ENCODE measurements at regions of chr20 and their contacts with region 1.

Region 1: GRCh38 chr20:44080646-44081267 is 106.2 kb downstream of the JPH2 start:
- DNase-seq: peak; percentile 55 to 84 (median 66)
- H3K4me3 ChIP-seq: no peak overlapping the region
- H3K4me3 Mint-ChIP-seq: no peak overlapping the region
- H3K27ac ChIP-seq: no peak overlapping the region
- H3K27ac Mint-ChIP-seq: peak overlapping the region in 5 of 8 donors; percentile 14 to 59 (median 31)
- H3K4me1 ChIP-seq: peaks cover 9% of the 10 kb centered on the region
- H3K4me1 Mint-ChIP-seq: peaks cover 5 to 10% (median 10%) of the 10 kb centered on the region in 3 donors
- H3K27me3 ChIP-seq: no peaks in the 10 kb centered on the region
- H3K27me3 Mint-ChIP-seq: peaks cover 0 to 3% of the 10 kb centered on the region in 2 donors

Region 2: DNA sequence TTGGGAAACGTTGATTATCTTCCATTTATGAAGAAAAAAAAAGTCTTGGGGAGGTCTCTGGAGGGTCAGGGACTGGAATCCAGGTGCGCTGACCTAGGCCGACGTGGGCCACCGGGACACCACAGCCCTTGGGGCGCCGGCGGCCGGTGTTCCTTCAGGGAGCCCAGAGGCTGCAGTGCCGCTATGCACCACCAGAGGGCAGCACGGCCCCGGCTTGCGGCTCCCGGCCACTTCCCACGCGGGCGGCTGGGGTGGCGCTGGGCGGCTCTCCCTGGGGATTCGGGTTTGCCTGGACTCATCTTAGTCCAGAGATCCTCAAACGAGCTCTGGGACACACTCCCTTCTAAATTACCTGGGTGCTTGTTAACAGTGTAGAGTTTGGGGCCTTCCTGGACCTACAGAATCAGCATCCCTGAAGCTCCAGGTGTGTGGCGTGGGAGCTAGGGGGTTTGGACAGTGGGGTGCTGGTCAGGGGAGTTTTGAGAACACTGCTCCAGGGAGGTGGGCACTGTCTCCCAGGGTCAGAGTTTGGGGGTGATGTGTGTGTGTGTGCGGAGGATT is 330.9 kb before region 1 on chr20:
- CTCF ChIA-PET with region 1: interaction called, 74 read pairs
- POLR2A ChIA-PET with region 1: no interaction called
- DNase-seq: peak; percentile 57 to 83 (median 73)
- H3K4me3 ChIP-seq: no peak overlapping the region
- H3K4me3 Mint-ChIP-seq: no peak overlapping the region
- H3K27ac ChIP-seq: no peak overlapping the region
- H3K27ac Mint-ChIP-seq: no peak overlapping the region
- H3K4me1 ChIP-seq: peaks cover 24% of the 10 kb centered on the region
- H3K4me1 Mint-ChIP-seq: peaks cover 22 to 36% (median 33%) of the 10 kb centered on the region in 3 donors
- H3K27me3 ChIP-seq: peaks cover 6% of the 10 kb centered on the region
- H3K27me3 Mint-ChIP-seq: peaks cover 5 to 45% of the 10 kb centered on the region in 2 donors

Region 3: GRCh38 chr20:44056010-44056698 is 24.6 kb before region 1 on chr20:
- CTCF ChIA-PET with region 1: interaction called, 48 read pairs
- POLR2A ChIA-PET with region 1: interaction called, 5 read pairs
- DNase-seq: peak in 3 of 5 donors; percentile 22 to 77 (median 77)
- H3K4me3 ChIP-seq: no peak overlapping the region
- H3K4me3 Mint-ChIP-seq: no peak overlapping the region
- H3K27ac ChIP-seq: no peak overlapping the region
- H3K27ac Mint-ChIP-seq: no peak overlapping the region
- H3K4me1 ChIP-seq: no peaks in the 10 kb centered on the region
- H3K4me1 Mint-ChIP-seq: no peaks in the 10 kb centered on the region
- H3K27me3 ChIP-seq: no peaks in the 10 kb centered on the region
- H3K27me3 Mint-ChIP-seq: peaks cover 0 to 6% of the 10 kb centered on the region in 2 donors

Region 4: DNA sequence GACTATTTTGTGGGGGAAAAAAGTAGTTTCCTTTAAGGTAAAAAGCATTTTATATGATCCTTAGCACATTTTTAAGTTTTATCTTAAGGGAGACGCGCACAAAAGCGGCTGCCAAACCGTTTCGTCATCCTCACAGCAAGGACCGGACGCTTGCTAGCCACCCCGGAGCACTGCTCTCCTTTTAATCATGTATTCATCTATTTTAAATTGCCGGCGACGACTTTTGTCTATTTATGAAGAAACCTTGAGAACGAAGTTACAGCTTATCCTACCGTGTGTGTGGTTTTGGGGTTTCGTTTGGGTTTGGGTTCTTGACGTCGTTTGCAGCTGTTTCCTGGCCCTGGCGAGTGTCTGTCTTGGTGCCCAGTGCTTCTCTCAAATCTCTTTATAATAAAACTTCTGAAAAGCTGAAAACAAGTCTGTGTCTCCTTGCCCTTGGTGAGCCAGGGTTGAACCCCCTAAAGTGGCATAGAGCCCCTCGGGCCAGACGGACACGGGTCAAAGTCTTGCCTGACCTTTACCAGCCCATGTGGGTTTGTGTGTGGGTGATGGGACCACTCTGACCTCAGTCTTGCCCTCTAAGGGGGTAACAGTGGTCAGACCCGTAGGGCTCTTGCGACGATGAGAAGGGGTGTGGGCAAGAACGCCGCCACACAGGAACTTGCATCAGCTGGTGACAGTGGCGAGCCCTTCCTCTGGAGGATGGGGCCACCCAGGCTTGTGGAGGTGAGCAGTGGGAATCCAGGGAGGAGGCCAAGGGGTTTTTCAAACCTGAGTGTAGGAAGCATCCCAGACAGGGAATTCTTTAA is 11.3 kb before region 1 on chr20:
- CTCF ChIA-PET with region 1: interaction called, 11 read pairs
- POLR2A ChIA-PET with region 1: no interaction called
- DNase-seq: peak; percentile 33 to 95 (median 75)
- H3K4me3 ChIP-seq: peak overlapping the region; percentile 74
- H3K4me3 Mint-ChIP-seq: peak overlapping the region; percentile 40 to 87 (median 79)
- H3K27ac ChIP-seq: peak overlapping the region; percentile 44
- H3K27ac Mint-ChIP-seq: peak overlapping the region; percentile 71 to 97 (median 90)
- H3K4me1 ChIP-seq: peaks cover 79% of the 10 kb centered on the region
- H3K4me1 Mint-ChIP-seq: peaks cover 23 to 55% (median 32%) of the 10 kb centered on the region in 3 donors
- H3K27me3 ChIP-seq: no peaks in the 10 kb centered on the region
- H3K27me3 Mint-ChIP-seq: peaks cover 0 to 9% of the 10 kb centered on the region in 2 donors

Region 5: DNA sequence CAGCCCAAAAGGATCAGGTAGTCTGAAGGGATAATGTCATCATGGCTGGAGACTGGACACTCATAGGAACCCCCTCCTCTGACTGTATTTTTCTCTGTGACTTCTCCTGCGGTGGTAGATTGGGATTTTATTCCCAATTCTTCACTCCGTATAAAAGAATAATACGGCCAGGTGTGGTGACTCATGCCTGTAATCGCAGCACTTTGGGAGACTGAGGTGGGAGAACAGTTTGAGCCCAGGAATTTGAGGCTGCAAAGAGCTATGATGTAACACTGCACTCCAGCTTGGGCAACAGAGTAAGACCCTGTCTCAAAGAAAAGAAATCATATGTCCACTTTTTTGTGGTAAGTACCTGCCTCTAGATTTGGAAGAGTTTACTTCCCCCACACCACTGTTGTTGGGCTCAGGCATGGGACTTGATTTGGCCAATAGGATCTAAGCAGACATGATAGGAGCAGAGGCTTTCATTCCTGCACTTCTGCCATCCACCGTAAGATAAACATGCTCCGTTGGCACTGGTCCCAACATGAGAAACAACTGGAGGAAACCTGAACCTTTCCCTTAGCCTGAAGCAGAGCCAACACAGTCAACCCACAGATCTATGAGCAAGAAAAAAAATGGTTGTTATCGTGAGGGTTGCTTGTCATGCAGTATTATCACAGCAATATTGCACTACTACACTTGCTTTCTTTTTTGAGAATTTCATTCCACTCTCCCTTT is 24.2 kb after region 1 on chr20:
- CTCF ChIA-PET with region 1: no interaction called
- POLR2A ChIA-PET with region 1: no interaction called
- DNase-seq: no peak
- H3K4me3 ChIP-seq: no peak overlapping the region
- H3K4me3 Mint-ChIP-seq: no peak overlapping the region
- H3K27ac ChIP-seq: no peak overlapping the region
- H3K27ac Mint-ChIP-seq: no peak overlapping the region
- H3K4me1 ChIP-seq: no peaks in the 10 kb centered on the region
- H3K4me1 Mint-ChIP-seq: no peaks in the 10 kb centered on the region
- H3K27me3 ChIP-seq: peaks cover 7% of the 10 kb centered on the region
- H3K27me3 Mint-ChIP-seq: peaks cover 46 to 86% of the 10 kb centered on the region in 2 donors

Region 6: DNA sequence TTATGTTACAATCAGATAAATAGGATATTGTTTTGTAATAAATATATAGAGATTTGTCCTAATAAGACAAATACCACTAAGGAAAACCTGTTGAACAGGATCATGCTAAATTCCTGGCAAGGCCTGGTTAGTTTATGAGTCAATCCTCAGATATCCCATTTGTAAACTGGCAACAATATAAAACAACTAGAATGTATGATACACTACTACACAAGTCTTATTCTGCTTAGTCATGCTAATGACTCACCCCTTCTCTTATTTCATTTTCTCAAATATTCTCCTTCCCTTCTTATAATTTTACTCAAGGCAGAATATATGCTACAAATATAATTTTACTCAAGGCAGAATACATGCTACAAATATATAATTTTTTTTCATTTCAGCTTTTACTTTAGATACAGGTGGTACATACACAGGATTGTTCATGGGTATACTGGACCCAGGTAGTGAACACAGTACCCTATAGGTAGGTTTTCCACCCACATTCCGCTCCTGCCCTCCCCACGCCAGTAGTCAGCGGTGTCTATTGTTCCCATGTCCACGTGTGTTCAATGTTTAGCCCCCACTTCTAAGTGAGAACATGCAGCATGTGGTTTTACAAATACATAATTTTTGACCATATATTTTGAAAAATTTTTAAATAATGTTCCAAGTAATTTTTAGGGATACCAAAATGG is 123.5 kb after region 1 on chr20:
- CTCF ChIA-PET with region 1: no interaction called
- POLR2A ChIA-PET with region 1: no interaction called
- DNase-seq: no peak
- H3K4me3 ChIP-seq: no peak overlapping the region
- H3K4me3 Mint-ChIP-seq: no peak overlapping the region
- H3K27ac ChIP-seq: peak overlapping the region; percentile 29
- H3K27ac Mint-ChIP-seq: peak overlapping the region in 2 of 8 donors; percentile 36 to 57
- H3K4me1 ChIP-seq: peaks cover 22% of the 10 kb centered on the region
- H3K4me1 Mint-ChIP-seq: peaks cover 40 to 77% (median 63%) of the 10 kb centered on the region in 3 donors
- H3K27me3 ChIP-seq: no peaks in the 10 kb centered on the region
- H3K27me3 Mint-ChIP-seq: peaks cover 0 to 1% of the 10 kb centered on the region in 2 donors

Region 7: GRCh38 chr20:44407402-44408184 is 326.8 kb after region 1 on chr20:
- CTCF ChIA-PET with region 1: no interaction called
- POLR2A ChIA-PET with region 1: no interaction called
- DNase-seq: no peak
- H3K4me3 ChIP-seq: no peak overlapping the region
- H3K4me3 Mint-ChIP-seq: no peak overlapping the region
- H3K27ac ChIP-seq: no peak overlapping the region
- H3K27ac Mint-ChIP-seq: no peak overlapping the region
- H3K4me1 ChIP-seq: no peaks in the 10 kb centered on the region
- H3K4me1 Mint-ChIP-seq: no peaks in the 10 kb centered on the region
- H3K27me3 ChIP-seq: no peaks in the 10 kb centered on the region
- H3K27me3 Mint-ChIP-seq: peaks cover 6 to 13% of the 10 kb centered on the region in 2 donors

Measured in CD8-positive, alpha-beta memory T cell (primary cell).